ENCODE measurements at regions of chr17 and their contacts with region 1.

Region 1: GRCh38 chr17:45385331-45385997 is 47.2 kb downstream of the ARHGAP27 start:
- DNase-seq: no peak
- H3K4me3 ChIP-seq: no peak overlapping the region
- H3K27ac ChIP-seq: no peak overlapping the region
- H3K4me1 ChIP-seq: peaks cover 0 to 32% (median 5%) of the 10 kb centered on the region in 3 donors
- H3K27me3 ChIP-seq: peaks cover 0 to 16% (median 0%) of the 10 kb centered on the region in 4 donors
- CTCF ChIP-seq: peak; percentile 96 to 99 (median 98)
- POLR2A ChIP-seq: no peak

Region 2: GRCh38 chr17:45218895-45219661 is 166.4 kb before region 1 on chr17:
- intact Hi-C with region 1: loop called (anchors 5 kb)
- DNase-seq: no peak
- H3K4me3 ChIP-seq: no peak overlapping the region
- H3K27ac ChIP-seq: peak overlapping the region in 1 of 4 donors; percentile 25
- H3K4me1 ChIP-seq: peaks cover 4 to 56% (median 23%) of the 10 kb centered on the region in 3 donors
- H3K27me3 ChIP-seq: peaks cover 0 to 35% (median 3%) of the 10 kb centered on the region in 4 donors
- CTCF ChIP-seq: peak; percentile 85 to 99 (median 98)
- POLR2A ChIP-seq: no peak

Region 3: GRCh38 chr17:45277216-45277849 is 108.1 kb before region 1 on chr17:
- intact Hi-C with region 1: loop called (anchors 5 kb)
- DNase-seq: peak; percentile 40
- H3K4me3 ChIP-seq: no peak overlapping the region
- H3K27ac ChIP-seq: peak overlapping the region; percentile 19 to 77 (median 52)
- H3K4me1 ChIP-seq: peaks cover 13 to 38% (median 14%) of the 10 kb centered on the region in 3 donors
- H3K27me3 ChIP-seq: no peaks in the 10 kb centered on the region
- CTCF ChIP-seq: peak; percentile 76 to 94 (median 92)
- POLR2A ChIP-seq: no peak

Region 4: GRCh38 chr17:45573924-45574770 is 188.7 kb after region 1 on chr17:
- intact Hi-C with region 1: no loop called
- DNase-seq: no peak
- H3K4me3 ChIP-seq: no peak overlapping the region
- H3K27ac ChIP-seq: peak overlapping the region in 1 of 4 donors; percentile 77
- H3K4me1 ChIP-seq: peaks cover 10 to 57% (median 31%) of the 10 kb centered on the region in 3 donors
- H3K27me3 ChIP-seq: no peaks in the 10 kb centered on the region
- CTCF ChIP-seq: no peak
- POLR2A ChIP-seq: no peak